Right ventricle myocardium superior (tissue), 1 donor: ENCODE measurements at regions of chr3 and their contacts with region 1.

Region 1: DNA sequence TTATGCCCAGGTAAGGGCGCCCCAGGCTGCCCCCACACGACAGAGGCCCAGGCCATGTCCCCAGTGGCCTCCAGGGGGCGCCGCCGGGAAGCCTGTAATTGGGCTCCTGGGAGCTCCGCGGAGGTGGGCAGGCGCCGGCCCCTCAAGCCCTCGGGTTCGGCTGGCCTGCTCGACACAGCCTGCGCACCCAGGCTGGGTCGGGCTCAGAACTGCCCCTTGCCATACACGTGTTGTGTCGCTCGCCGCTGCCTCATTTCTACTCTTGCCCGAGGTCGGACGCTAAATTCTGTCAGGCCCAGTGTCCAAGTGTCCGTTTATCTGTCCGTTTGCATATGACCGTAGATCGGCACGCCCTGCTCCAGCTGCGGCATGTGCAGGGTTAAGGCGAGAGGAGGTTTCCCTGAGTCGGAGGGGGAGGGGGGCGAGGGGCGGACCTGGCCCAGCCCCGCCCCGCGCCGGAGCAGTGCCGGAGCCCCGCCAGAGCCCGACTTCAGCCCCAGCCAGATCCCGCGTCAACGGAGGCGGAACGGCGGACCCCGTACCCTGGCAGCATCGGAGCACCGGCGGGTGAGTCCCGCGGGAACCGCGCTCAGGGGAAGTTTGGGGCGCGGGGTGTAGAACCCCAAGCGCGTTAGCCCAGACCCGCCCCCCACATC is at the start of gene KLHDC8B:
- DNase-seq: peak; percentile 93
- ATAC-seq: peak; percentile 90
- total RNA-seq, gene KLHDC8B: 129 TPM

Region 2: GRCh38 chr3:49276475-49277382 is 105.5 kb after region 1 on chr3 and contains the start of gene C3orf62:
- intact Hi-C with region 1: loop called (anchors 5 kb)
- DNase-seq: peak; percentile 96
- ATAC-seq: peak; percentile 96
- total RNA-seq, gene C3orf62: 2.6 TPM

Region 3: GRCh38 chr3:49339945-49340800 is 168.9 kb after region 1 on chr3 and contains the start of gene USP4:
- intact Hi-C with region 1: loop called (anchors 5 kb)
- DNase-seq: peak; percentile 96
- ATAC-seq: peak; percentile 98
- total RNA-seq, gene USP4: 34.7 TPM

Region 4: GRCh38 chr3:49454458-49454857 is 283.2 kb after region 1 on chr3:
- intact Hi-C with region 1: loop called (anchors 10 kb)
- DNase-seq: no peak
- ATAC-seq: peak; percentile 73